ENCODE measurements at regions of chr7 and their contacts with region 1.

Region 1: GRCh38 chr7:2670720-2671391 is 17.1 kb upstream of the AMZ1 start:
- DNase-seq: peak; percentile 87
- CTCF ChIP-seq: peak; percentile 95

Region 2: GRCh38 chr7:2680792-2681490 is 10.1 kb after region 1 on chr7:
- CTCF ChIA-PET with region 1: interaction called, 38 read pairs
- POLR2A ChIA-PET with region 1: no interaction called
- DNase-seq: peak; percentile 78
- CTCF ChIP-seq: peak; percentile 59

Region 3: DNA sequence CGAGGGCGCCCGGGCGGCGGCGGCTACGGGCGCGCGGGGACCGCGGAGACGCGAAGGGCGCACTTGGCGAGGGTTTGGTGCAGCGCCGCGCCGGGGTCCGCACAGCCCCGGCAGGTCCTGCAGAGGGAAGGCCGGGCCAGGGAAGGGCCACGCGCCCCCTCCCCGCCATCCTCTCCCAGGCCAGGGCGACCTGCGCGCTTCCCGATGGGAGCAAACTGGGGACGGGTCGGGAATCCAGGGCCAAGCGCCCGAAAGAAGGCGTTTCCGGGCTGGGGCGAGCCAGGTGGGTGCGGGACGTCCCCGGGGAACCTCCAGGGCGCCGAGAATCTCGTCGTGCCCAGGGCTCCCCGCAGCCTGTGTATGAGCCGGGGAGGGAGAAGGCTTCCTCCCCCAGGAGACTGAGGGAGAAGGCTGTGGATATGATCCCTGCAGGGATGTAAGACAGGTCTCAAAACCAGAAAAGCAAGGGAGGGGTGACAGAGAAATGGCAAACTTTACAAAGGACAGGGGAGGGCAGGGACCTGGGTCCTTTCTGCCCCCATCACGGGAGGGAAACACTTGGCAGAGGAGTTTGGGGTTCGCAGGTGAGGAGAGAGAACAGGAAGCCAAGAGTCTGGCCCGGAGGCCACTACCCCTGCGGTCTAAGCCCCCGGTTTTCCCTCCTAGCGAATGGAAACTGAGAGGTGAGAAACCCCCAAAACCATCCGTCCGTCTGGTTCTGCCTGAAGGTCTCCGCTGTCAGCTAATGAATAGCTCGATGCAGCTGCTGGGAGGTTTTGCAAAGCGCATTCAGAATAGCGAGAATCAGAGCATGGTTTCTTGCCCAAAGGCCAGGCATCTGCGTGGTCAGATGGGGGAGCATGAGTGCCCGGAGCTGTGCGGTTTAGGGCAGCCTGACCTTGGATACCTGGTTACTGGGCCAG is 17.8 kb after region 1 on chr7:
- CTCF ChIA-PET with region 1: interaction called, 14 read pairs
- POLR2A ChIA-PET with region 1: no interaction called
- DNase-seq: peak; percentile 78
- CTCF ChIP-seq: no peak

Region 4: DNA sequence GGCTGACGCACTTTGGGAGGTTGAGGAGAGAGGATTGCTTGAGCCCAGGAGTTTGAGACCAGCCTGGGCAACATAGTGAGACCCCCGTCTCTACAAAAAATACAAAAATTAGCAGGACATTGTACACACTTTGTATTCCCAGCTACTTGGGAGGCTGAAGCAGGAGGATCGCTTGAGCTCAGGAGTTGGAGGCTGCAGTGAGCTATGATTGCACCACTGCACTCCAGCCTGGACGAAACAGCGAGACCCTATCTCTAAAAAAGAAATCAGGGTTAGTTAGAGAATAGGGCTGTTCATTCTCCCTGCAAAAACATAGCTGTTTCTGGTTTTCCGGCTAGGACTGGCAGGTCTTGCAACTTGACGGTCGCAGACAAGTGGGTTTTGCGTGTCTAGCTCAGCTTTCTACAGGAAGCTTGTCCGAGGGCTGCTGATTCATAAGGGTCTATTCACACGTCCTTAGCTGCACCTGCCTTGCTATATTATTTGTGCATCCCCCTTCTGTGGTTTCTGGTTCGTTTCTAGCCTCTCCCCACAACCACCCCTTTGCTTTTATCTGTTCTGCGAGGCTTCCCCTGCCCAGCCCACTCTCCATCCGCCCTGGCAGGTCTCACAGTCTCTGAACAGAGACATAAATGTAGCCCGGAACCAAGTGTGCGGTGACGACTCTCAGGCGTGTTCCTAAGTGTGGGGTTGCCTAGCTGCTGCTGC is 27.9 kb after region 1 on chr7:
- CTCF ChIA-PET with region 1: interaction called, 14 read pairs
- POLR2A ChIA-PET with region 1: no interaction called
- DNase-seq: peak; percentile 92
- CTCF ChIP-seq: no peak

Region 5: DNA sequence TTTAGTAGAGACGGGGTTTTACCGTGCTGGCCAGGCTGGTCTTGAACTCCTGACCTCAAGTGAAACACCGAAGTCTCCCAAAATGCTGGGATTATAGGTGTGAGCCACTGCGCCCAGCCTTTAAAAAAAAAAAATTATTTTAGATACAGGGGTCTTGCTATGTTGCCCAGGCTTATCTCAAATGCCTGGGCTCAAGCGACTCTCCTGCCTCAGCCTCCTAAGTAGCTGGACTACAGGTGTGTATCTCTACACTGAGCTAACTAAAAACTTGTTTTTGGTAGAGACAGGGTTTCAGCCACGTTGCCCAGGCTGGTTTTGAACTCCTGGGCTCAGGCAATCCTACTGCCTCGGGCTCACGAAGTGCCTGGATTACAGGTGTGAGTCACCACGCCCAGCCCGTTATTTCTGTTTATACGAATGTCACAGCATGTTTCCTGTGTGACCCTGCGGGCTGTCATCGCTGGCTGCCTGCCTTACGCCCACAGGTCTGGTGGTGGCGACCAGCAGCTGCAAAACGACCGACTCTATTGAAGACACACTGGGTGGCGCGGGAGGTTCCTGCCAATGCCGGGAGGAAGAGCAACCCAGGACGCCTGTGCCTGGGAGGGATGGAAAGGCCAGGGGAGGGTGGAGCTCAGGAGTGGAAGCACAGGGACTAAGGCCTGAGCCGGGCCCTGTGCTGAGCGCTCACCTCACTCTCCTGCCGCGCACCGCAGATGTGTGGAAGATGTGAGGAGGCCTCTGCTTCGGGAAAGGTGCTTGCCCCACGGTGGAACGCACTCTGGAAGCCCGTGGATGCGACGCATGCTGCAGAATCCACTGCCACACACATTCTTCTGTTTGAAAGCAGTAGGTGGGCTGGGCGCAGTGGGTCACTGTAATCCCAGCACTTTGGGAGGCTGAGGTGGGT is 50.0 kb after region 1 on chr7:
- CTCF ChIA-PET with region 1: interaction called, 56 read pairs
- POLR2A ChIA-PET with region 1: no interaction called
- DNase-seq: peak; percentile 91
- CTCF ChIP-seq: peak; percentile 39

Measured in GM10248 (cell line).